HepG2 (cell line): ENCODE measurements at regions of chr10 and their contacts with region 1.

Region 1: DNA sequence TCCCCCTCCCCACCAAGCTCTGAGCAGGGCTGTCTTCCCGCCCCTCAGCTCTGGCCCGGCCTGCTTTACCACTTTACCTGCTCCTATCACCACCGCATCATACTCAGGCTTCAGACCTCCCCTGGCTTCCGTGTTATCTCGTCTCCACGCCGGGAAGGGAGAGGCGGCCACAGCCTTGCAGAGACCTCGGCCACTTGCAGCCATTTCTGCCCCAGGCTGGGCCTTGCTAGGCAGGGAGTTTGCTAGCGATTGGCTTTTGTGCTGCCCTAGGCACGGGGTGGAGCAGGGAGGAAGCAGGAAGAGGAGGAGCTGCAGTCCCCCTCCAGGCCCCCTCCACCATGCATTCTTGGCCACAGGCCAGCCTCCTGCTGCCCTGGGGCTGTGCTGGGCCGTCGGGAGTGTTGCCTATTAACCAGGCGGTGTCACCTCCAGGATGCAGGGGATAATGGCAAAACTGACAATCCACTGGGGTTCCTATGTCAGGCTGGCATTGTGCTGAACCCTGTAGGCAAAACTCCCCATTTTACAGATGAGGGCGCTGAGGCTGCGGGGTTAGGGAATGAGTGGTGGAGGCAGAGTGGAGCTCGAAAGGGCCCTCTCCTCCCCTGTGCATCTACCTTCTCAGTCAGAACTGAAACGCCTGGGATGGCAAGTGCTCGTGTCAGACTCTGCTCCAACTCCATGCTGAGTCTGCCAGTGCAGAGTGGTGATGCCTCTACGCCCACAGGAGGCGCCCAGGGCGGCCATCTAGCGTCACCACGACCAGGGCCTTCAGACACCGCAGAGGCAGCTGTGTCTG is at the start of gene PYROXD2:
- DNase-seq: peak; percentile 88
- ATAC-seq: peak; percentile 95
- H3K4me3 ChIP-seq: peak within 1 kb of the TSS; percentile 70 to 81 (median 70)
- H3K27ac ChIP-seq: peak within 1 kb of the TSS; percentile 78
- H3K4me1 ChIP-seq: peaks cover 18% of the 10 kb centered on the region
- H3K27me3 ChIP-seq: no peaks in the 10 kb centered on the region
- CTCF ChIP-seq: 0 out of 2 replicates have a peak, but pooled peaks have one; percentile 4
- EP300 ChIP-seq: no peak
- POLR2A ChIP-seq: peak; percentile 93 to 97
- RAD21 ChIP-seq: no peak
- total RNA-seq, gene PYROXD2: 1.8 and 2.0 TPM in 2 replicates

Region 2: DNA sequence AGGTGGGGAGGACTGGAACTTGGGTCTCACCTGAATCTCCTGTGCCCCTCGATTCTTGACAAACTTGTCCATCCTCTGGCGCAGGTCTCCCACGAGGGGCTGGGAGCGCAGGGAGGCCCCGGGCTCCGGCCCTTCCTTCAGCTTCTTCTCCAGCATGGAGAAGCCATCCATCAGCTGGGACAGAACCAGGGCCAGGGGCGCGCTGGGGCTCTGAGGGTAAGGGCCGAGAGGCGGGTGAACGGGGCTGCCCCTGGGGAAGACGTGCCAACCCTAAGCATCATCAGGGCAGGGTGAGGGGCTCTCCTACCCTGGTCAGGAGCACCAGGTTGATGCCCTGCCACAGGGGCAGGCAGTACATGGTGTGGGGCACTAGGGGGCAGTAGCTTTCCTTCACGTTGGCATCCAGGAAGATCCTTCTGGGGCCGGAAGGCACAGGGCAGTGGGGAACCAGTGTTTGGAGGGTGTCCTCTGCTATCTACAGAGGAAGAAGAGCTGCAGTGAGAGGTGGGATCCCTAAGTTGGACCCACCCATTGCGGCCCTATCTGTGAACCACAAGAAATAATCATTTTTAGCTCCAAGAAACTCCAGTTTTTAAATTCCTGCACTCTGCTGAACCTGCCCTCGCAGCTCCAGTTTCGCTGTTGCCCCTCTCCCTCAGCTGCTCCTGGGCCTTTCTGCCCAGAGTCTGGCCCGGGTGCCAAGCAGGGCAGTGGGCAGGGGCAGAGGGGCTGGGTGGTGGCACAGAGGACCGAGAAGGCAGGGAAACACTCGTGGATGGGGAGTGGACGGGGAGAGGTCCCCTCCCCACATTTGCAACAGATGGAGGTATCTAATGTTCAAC is 10.6 kb after region 1 on chr10:
- CTCF ChIA-PET with region 1: no interaction called
- POLR2A ChIA-PET with region 1: interaction called, 29 read pairs
- in situ Hi-C with region 1: no loop called
- intact Hi-C with region 1: no loop called
- DNase-seq: peak; percentile 29
- ATAC-seq: peak; percentile 72
- H3K4me3 ChIP-seq: no peak overlapping the region
- H3K27ac ChIP-seq: no peak overlapping the region
- H3K4me1 ChIP-seq: peaks cover 10% of the 10 kb centered on the region
- H3K27me3 ChIP-seq: no peaks in the 10 kb centered on the region
- CTCF ChIP-seq: peak; percentile 75
- EP300 ChIP-seq: no peak
- POLR2A ChIP-seq: no peak
- RAD21 ChIP-seq: no peak